Gastrocnemius medialis (tissue), 4 donors: ENCODE measurements at regions of chr1 and their contacts with region 1.

Region 1: DNA sequence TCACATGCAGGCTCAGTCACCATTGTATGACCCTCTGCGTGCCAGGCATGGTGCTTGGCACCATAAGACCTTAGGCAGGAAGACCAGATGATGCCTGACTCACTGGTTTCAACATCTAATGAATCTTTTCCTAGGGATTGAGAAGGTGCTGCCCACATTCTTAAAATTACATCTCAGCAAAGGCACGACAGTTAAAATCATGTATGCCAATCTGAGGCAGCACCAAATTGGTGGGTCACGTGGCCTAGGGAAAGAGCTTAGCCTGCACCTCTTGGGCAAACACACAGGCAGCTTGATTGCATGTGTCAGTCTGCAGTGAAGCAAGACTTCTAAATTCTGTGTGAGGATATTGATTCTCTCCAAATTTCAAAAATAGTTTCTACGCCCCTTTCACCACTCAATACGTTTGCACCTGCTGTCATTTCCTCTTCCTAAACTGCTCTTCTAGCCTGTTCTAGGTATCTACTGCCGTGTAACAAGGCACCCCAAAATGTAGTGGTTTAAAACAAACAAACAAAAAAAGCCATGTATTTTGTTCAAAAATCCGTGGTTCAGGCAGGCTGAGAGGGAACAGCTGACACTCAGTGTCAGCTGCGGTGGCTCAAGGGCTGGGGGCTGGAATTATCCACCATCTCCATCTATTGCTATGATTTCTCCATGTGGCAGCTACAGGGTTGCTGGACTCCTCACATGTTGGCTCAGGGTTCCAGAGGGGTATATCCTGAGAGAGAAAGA is 160.2 kb upstream of the FGGY start:
- DNase-seq: peak; percentile 64 to 82
- ATAC-seq: peak; percentile 62 to 74
- H3K4me3 ChIP-seq: no peak overlapping the region
- H3K27ac ChIP-seq: peak overlapping the region; percentile 85 to 91 (median 88)
- H3K4me1 ChIP-seq: peaks cover 32 to 42% of the 10 kb centered on the region in 2 donors
- H3K27me3 ChIP-seq: no peaks in the 10 kb centered on the region
- CTCF ChIP-seq: no peak
- POLR2A ChIP-seq: no peak

Region 2: DNA sequence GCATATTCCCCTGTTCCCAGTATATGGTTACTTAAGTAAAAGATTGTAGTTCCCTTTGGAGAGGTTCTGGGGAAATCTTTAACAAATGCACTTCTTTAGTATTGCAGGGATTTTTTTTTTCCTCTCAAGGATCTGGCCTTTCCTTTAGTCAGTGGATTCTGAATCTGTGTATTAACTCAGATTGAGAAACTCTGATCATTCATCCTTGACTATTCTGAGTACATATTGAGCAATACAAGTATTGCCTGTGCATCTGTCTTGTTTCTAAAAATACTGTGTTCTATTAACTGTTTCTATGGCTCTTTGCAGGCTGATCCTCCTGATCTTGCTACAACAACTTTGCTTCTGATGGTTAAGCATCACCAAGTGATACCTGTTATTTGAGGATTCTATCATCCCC is 92.4 kb after region 1 on chr1:
- in situ Hi-C with region 1: no loop called
- intact Hi-C with region 1: loop called (anchors 1 kb)
- DNase-seq: no peak
- ATAC-seq: peak; percentile 94 to 95
- H3K4me3 ChIP-seq: no peak overlapping the region
- H3K27ac ChIP-seq: peak overlapping the region; percentile 60 to 81 (median 78)
- H3K4me1 ChIP-seq: peaks cover 30 to 38% of the 10 kb centered on the region in 2 donors
- H3K27me3 ChIP-seq: no peaks in the 10 kb centered on the region
- CTCF ChIP-seq: no peak
- POLR2A ChIP-seq: no peak